Psoas muscle (tissue), 8 donors: ENCODE measurements at regions of chr21 and their contacts with region 1.

Region 1: DNA sequence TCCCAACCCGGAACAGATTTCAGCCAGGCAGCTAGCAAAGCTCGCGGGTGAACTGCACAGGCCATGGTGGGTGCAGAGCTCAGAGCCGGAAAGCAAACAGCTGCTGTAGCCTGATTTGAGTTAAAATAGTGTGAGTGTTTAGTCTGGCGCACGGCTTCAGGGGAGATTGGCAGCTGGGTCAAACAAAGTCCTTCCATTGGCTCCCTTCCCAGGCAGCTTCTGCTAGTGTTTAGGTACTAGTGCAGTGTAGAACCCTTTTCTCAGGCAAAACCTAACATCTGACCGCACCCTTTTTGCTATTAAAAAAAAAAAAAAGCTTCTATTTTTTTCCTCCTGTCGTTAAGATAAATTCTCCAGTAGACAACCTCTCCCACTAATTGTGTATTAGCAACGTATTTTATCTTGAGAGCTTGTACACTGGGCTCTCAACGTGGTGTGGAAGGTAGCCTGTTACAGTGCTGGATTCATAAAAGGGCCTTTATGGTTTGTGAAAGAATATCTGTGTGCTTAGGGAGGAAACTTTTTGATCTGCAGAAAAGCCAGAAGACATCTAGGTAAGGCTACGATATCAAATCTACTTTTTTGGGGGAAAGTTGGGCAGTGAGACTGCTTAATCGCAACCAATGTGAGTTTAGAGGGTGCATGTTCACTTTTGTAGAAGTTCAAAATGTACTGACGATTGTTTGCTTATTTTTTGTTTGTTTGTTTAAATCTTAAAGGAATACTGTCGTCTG is 689.6 kb downstream of the USP25 start:
- DNase-seq: peak; percentile 50 to 76
- ATAC-seq: peak; percentile 77 to 83 (median 80)
- H3K4me3 ChIP-seq: peak overlapping the region; percentile 71
- H3K27ac ChIP-seq: peak overlapping the region; percentile 81
- H3K4me1 ChIP-seq: peaks cover 19% of the 10 kb centered on the region
- H3K27me3 ChIP-seq: no peaks in the 10 kb centered on the region
- CTCF ChIP-seq: no peak

Region 2: GRCh38 chr21:16082038-16082816 is 337.1 kb before region 1 on chr21:
- intact Hi-C with region 1: loop called in 1 of 2 experiments (anchors 10 kb)
- DNase-seq: no peak
- ATAC-seq: no peak
- H3K4me3 ChIP-seq: no peak overlapping the region
- H3K27ac ChIP-seq: no peak overlapping the region
- H3K4me1 ChIP-seq: peaks cover 8% of the 10 kb centered on the region
- H3K27me3 ChIP-seq: no peaks in the 10 kb centered on the region
- CTCF ChIP-seq: peak; percentile 54

Region 3: GRCh38 chr21:16211339-16212303 is 207.7 kb before region 1 on chr21:
- intact Hi-C with region 1: loop called in 1 of 2 experiments (anchors 10 kb)
- DNase-seq: no peak
- ATAC-seq: peak; percentile 69 to 89 (median 78)
- H3K4me3 ChIP-seq: peak overlapping the region; percentile 65
- H3K27ac ChIP-seq: peak overlapping the region; percentile 79
- H3K4me1 ChIP-seq: peaks cover 19% of the 10 kb centered on the region
- H3K27me3 ChIP-seq: no peaks in the 10 kb centered on the region
- CTCF ChIP-seq: no peak

Region 4: DNA sequence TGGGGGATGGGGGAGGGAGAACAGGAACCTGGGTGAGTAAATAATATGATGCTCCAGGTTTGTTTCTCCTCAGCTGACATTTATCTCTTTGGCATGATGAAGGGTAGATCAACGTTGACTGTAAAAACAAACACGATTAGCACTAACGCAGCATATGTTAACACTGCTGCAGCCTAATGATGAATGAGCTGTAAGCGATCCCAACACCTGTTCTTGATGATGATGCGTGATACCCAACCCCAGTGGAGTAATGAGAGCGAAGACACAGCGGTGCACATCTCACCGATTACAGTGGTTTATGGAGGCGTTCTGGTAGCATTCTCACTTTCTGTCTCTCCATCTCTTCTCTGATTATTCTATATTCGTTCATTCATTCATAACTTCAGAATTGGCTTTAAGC is 49.2 kb before region 1 on chr21:
- intact Hi-C with region 1: loop called (anchors 5 kb)
- DNase-seq: peak in 1 of 2 donors; percentile 48
- ATAC-seq: peak; percentile 93 to 99 (median 97)
- H3K4me3 ChIP-seq: peak overlapping the region; percentile 31
- H3K27ac ChIP-seq: peak overlapping the region; percentile 66
- H3K4me1 ChIP-seq: peaks cover 4% of the 10 kb centered on the region
- H3K27me3 ChIP-seq: no peaks in the 10 kb centered on the region
- CTCF ChIP-seq: no peak

Region 5: GRCh38 chr21:16438761-16439160 is 19.4 kb after region 1 on chr21:
- intact Hi-C with region 1: loop called in 1 of 2 experiments (anchors 1 kb)
- DNase-seq: no peak
- ATAC-seq: no peak
- H3K4me3 ChIP-seq: no peak overlapping the region
- H3K27ac ChIP-seq: no peak overlapping the region
- H3K4me1 ChIP-seq: peaks cover 17% of the 10 kb centered on the region
- H3K27me3 ChIP-seq: no peaks in the 10 kb centered on the region
- CTCF ChIP-seq: no peak

Region 6: GRCh38 chr21:16829532-16829931 is 410.2 kb after region 1 on chr21:
- intact Hi-C with region 1: no loop called
- DNase-seq: no peak
- ATAC-seq: no peak
- H3K4me3 ChIP-seq: no peak overlapping the region
- H3K27ac ChIP-seq: no peak overlapping the region
- H3K4me1 ChIP-seq: no peaks in the 10 kb centered on the region
- H3K27me3 ChIP-seq: no peaks in the 10 kb centered on the region
- CTCF ChIP-seq: no peak